ENCODE measurements at regions of chr2 and their contacts with region 1.

Region 1: DNA sequence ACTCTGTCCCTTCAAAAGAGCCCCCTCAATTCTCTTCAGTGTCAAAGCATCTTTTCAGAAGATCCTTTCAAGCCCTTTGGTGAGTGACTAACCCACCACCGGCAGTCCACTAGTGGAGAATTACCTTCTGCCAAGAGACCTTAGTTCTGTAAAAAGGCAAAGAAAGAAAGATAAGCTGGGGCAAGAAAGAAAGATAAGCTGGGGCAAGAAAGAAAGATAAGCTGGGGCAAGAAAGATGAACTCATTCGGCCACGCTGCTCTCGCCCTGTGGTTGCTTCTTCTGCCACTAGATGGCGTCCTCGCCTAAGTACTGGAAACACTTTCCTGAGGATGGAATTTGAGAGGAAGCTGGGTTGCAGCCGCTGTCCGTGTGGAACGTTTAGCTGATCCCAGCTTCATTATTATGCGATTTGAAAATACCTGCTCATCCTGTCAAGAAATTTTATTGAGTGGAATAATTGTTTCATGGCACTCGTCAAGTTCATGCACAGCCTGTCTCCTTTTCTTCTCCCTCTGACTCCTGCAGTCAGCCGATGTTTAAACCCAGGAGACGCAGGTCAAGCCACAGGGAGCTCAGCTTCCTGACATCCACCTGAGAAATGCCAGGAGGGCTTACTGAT is 17.3 kb upstream of the ANXA4 start:
- DNase-seq: peak; percentile 61 to 90 (median 84)
- ATAC-seq: peak; percentile 88
- H3K4me3 ChIP-seq: no peak overlapping the region
- H3K4me3 Mint-ChIP-seq: peak overlapping the region; percentile 52
- H3K27ac ChIP-seq: no peak overlapping the region
- H3K27ac Mint-ChIP-seq: no peak overlapping the region
- H3K4me1 ChIP-seq: peaks cover 4% of the 10 kb centered on the region
- H3K4me1 Mint-ChIP-seq: peaks cover 6% of the 10 kb centered on the region
- H3K27me3 ChIP-seq: no peaks in the 10 kb centered on the region
- H3K27me3 Mint-ChIP-seq: no peaks in the 10 kb centered on the region
- CTCF ChIP-seq: peak; percentile 97

Region 2: GRCh38 chr2:69565431-69565839 is 159.2 kb before region 1 on chr2:
- CTCF ChIA-PET with region 1: interaction called, 38 read pairs
- POLR2A ChIA-PET with region 1: no interaction called
- intact Hi-C with region 1: no loop called
- DNase-seq: peak; percentile 43 to 83 (median 73)
- ATAC-seq: peak; percentile 79
- H3K4me3 ChIP-seq: no peak overlapping the region
- H3K4me3 Mint-ChIP-seq: peak overlapping the region; percentile 63
- H3K27ac ChIP-seq: no peak overlapping the region
- H3K27ac Mint-ChIP-seq: peak overlapping the region; percentile 72
- H3K4me1 ChIP-seq: peaks cover 91% of the 10 kb centered on the region
- H3K4me1 Mint-ChIP-seq: peaks cover 92% of the 10 kb centered on the region
- H3K27me3 ChIP-seq: no peaks in the 10 kb centered on the region
- H3K27me3 Mint-ChIP-seq: no peaks in the 10 kb centered on the region
- CTCF ChIP-seq: peak; percentile 80

Region 3: GRCh38 chr2:69643602-69644505 is 80.8 kb before region 1 on chr2 and contains the start of gene AAK1:
- CTCF ChIA-PET with region 1: interaction called, 20 read pairs
- POLR2A ChIA-PET with region 1: interaction called, 5 read pairs
- intact Hi-C with region 1: no loop called
- DNase-seq: peak; percentile 60 to 92 (median 83)
- ATAC-seq: peak; percentile 41
- H3K4me3 ChIP-seq: peak within 1 kb of the TSS; percentile 83 to 95
- H3K4me3 Mint-ChIP-seq: peak within 1 kb of the TSS; percentile 96
- H3K27ac ChIP-seq: peak within 1 kb of the TSS; percentile 58 to 86
- H3K27ac Mint-ChIP-seq: peak within 1 kb of the TSS; percentile 97
- H3K4me1 ChIP-seq: peaks cover 54% of the 10 kb centered on the region
- H3K4me1 Mint-ChIP-seq: peaks cover 65% of the 10 kb centered on the region
- H3K27me3 ChIP-seq: no peaks in the 10 kb centered on the region
- H3K27me3 Mint-ChIP-seq: no peaks in the 10 kb centered on the region
- CTCF ChIP-seq: no peak
- total RNA-seq, gene AAK1: 156 to 174 TPM

Region 4: GRCh38 chr2:69741619-69742466 is 17.2 kb after region 1 on chr2 and contains the start of gene ANXA4:
- CTCF ChIA-PET with region 1: interaction called, 43 read pairs
- POLR2A ChIA-PET with region 1: no interaction called
- intact Hi-C with region 1: no loop called
- DNase-seq: peak; percentile 8 to 79 (median 55)
- ATAC-seq: peak; percentile 89
- H3K4me3 ChIP-seq: peak within 1 kb of the TSS; percentile 78 to 89
- H3K4me3 Mint-ChIP-seq: peak within 1 kb of the TSS; percentile 95
- H3K27ac ChIP-seq: peak within 1 kb of the TSS; percentile 21 to 49
- H3K27ac Mint-ChIP-seq: peak within 1 kb of the TSS; percentile 89
- H3K4me1 ChIP-seq: peaks cover 6% of the 10 kb centered on the region
- H3K4me1 Mint-ChIP-seq: peaks cover 14% of the 10 kb centered on the region
- H3K27me3 ChIP-seq: no peaks in the 10 kb centered on the region
- H3K27me3 Mint-ChIP-seq: no peaks in the 10 kb centered on the region
- CTCF ChIP-seq: no peak
- total RNA-seq, gene ANXA4: 2.9 TPM

Region 5: DNA sequence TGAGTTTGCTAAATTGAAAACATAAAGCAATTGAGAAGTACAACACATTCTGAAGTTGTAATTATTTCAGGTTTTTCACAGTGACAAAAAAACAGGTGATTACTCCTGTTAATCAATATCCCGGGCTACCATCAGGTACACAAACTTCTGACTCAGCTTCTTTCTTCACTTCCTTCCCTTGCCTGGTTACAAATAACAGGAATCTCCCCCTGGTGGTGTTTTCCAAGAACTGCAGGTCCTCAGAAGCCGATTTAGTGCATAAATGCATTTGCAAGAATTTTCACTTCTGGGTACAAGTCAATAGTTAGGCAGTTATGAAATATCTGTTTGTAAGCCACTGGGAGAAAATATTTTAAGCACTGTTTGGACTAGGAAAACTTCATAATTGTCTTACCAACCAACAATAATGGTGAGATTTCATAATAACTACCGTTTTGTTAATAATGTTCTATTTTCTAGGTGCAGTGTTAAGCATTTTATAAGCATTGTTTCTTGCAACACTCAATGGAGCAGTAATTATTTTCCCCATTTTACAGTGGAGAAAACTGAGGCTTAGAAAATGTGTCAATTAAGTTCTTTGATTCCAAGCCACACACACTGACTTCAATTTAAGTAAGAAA is 92.4 kb after region 1 on chr2:
- CTCF ChIA-PET with region 1: interaction called, 368 read pairs
- POLR2A ChIA-PET with region 1: interaction called, 5 read pairs
- intact Hi-C with region 1: loop called (anchors 1 kb)
- DNase-seq: peak; percentile 45 to 88 (median 73)
- ATAC-seq: peak; percentile 96
- H3K4me3 ChIP-seq: no peak overlapping the region
- H3K4me3 Mint-ChIP-seq: no peak overlapping the region
- H3K27ac ChIP-seq: no peak overlapping the region
- H3K27ac Mint-ChIP-seq: no peak overlapping the region
- H3K4me1 ChIP-seq: no peaks in the 10 kb centered on the region
- H3K4me1 Mint-ChIP-seq: peaks cover 3% of the 10 kb centered on the region
- H3K27me3 ChIP-seq: no peaks in the 10 kb centered on the region
- H3K27me3 Mint-ChIP-seq: no peaks in the 10 kb centered on the region
- CTCF ChIP-seq: peak; percentile 94

Region 6: DNA sequence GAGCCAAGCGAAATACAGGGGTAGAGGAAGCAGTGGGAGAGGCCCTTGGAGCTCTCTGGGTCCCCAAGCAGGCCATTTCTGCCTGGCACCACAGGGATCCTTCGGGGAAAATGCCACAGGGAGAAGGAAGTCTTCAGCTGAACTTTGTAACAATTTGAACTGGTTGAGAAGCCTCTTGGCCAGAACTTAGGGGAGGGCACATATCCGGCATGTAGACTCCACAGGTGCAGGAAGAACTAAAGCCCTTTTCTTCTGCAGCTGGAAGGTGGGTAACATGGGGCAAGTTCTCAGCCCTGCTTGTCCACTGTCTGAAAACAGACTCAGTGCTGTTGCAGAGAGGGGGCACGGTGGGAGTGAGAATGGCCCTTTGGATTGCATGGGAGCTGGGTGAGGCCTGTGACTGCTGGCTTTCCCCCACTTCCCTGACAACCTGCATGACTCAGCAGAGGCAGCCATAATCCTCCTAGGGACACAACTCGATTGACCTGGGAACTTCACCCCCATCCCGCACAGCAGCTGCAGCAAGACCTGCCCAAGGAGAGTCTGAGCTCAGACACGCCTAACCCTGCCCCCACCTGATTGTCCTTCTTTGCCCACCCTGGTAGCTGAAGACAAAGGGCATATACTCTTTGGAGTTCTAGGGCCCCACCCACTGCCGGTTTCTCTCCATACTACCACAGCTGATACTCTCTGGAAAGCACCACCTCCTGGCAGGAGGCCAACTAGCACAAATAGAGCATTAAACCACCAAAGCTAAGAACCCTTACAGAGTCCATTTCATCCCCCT is 678.8 kb after region 1 on chr2:
- CTCF ChIA-PET with region 1: no interaction called
- POLR2A ChIA-PET with region 1: no interaction called
- intact Hi-C with region 1: no loop called
- DNase-seq: no peak
- ATAC-seq: no peak
- H3K4me3 ChIP-seq: no peak overlapping the region
- H3K4me3 Mint-ChIP-seq: no peak overlapping the region
- H3K27ac ChIP-seq: no peak overlapping the region
- H3K27ac Mint-ChIP-seq: no peak overlapping the region
- H3K4me1 ChIP-seq: no peaks in the 10 kb centered on the region
- H3K4me1 Mint-ChIP-seq: no peaks in the 10 kb centered on the region
- H3K27me3 ChIP-seq: no peaks in the 10 kb centered on the region
- H3K27me3 Mint-ChIP-seq: peaks cover 7% of the 10 kb centered on the region
- CTCF ChIP-seq: no peak

Region 7: DNA sequence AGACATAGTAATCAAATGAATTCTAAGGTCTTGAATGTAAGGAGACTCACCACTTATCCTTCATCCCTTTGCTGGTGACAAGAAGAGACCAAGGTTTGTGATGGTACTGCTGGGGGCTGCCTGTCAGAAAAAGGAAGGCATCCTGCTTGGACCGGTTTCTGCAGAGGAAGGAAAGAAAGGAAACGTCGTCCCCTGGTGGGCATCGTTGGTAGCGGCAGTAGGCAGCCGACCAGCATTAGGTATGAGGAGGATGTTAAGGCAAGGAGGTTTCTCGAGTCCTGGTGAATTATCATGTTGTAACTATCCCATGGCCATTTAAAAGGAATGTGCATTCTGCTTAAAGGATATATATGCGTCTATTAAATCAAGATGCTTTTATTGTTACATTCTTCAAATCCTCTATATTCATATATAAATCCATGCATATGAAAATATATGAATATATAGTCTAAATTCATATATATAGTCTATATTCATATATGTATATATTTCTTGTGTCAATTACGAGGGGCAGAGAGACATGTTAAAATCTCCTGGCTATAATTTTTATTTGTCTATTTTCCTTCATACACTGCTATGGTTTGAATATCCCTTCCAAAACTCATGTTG is 923.3 kb after region 1 on chr2:
- CTCF ChIA-PET with region 1: no interaction called
- POLR2A ChIA-PET with region 1: no interaction called
- intact Hi-C with region 1: loop called in 1 of 2 experiments (anchors 5 kb)
- DNase-seq: peak; percentile 55 to 83 (median 72)
- ATAC-seq: peak; percentile 96
- H3K4me3 ChIP-seq: no peak overlapping the region
- H3K4me3 Mint-ChIP-seq: no peak overlapping the region
- H3K27ac ChIP-seq: no peak overlapping the region
- H3K27ac Mint-ChIP-seq: no peak overlapping the region
- H3K4me1 ChIP-seq: no peaks in the 10 kb centered on the region
- H3K4me1 Mint-ChIP-seq: no peaks in the 10 kb centered on the region
- H3K27me3 ChIP-seq: no peaks in the 10 kb centered on the region
- H3K27me3 Mint-ChIP-seq: peaks cover 6% of the 10 kb centered on the region
- CTCF ChIP-seq: peak; percentile 94